ENCODE measurements at regions of chr12 and their contacts with region 1.

Region 1: GRCh38 chr12:107449891-107450290 is 235.7 kb upstream of the PWP1 start:
- DNase-seq: no peak
- ATAC-seq: no peak
- H3K4me3 ChIP-seq: no peak overlapping the region
- H3K27ac ChIP-seq: no peak overlapping the region
- H3K4me1 ChIP-seq: no peaks in the 10 kb centered on the region
- H3K27me3 ChIP-seq: peaks cover 0 to 11% (median 0%) of the 10 kb centered on the region in 9 donors
- CTCF ChIP-seq: no peak
- POLR2A ChIP-seq: no peak

Region 2: GRCh38 chr12:106369607-106370346 is 1080.1 kb before region 1 on chr12:
- intact Hi-C with region 1: no loop called
- DNase-seq: no peak
- ATAC-seq: no peak
- H3K4me3 ChIP-seq: no peak overlapping the region
- H3K27ac ChIP-seq: no peak overlapping the region
- H3K4me1 ChIP-seq: no peaks in the 10 kb centered on the region
- H3K27me3 ChIP-seq: no peaks in the 10 kb centered on the region
- CTCF ChIP-seq: no peak
- POLR2A ChIP-seq: no peak

Region 3: GRCh38 chr12:107522692-107523477 is 73.0 kb after region 1 on chr12:
- intact Hi-C with region 1: loop called in 1 of 10 experiments (anchors 10 kb)
- DNase-seq: no peak
- ATAC-seq: no peak
- H3K4me3 ChIP-seq: no peak overlapping the region
- H3K27ac ChIP-seq: no peak overlapping the region
- H3K4me1 ChIP-seq: no peaks in the 10 kb centered on the region
- H3K27me3 ChIP-seq: no peaks in the 10 kb centered on the region
- CTCF ChIP-seq: peak in 1 of 12 donors; percentile 9
- POLR2A ChIP-seq: no peak